Activated CD4-positive, alpha-beta memory T cell treated with anti-CD3 and anti-CD28 coated beads, Interleukin-2, amount 10 ng/mL, durations not matched to agents 7 days and 5 days (primary cell): ENCODE measurements at regions of chr15 and their contacts with region 1.

Region 1: GRCh38 chr15:78540141-78540928 is at the start of gene PSMA4:
- DNase-seq: peak; percentile 94
- H3K4me3 Mint-ChIP-seq: peak within 1 kb of the TSS; percentile 90
- H3K27ac Mint-ChIP-seq: peak within 1 kb of the TSS; percentile 87
- H3K4me1 Mint-ChIP-seq: peaks cover 38% of the 10 kb centered on the region
- H3K27me3 Mint-ChIP-seq: no peaks in the 10 kb centered on the region
- total RNA-seq, gene PSMA4: 226 to 235 TPM

Region 2: DNA sequence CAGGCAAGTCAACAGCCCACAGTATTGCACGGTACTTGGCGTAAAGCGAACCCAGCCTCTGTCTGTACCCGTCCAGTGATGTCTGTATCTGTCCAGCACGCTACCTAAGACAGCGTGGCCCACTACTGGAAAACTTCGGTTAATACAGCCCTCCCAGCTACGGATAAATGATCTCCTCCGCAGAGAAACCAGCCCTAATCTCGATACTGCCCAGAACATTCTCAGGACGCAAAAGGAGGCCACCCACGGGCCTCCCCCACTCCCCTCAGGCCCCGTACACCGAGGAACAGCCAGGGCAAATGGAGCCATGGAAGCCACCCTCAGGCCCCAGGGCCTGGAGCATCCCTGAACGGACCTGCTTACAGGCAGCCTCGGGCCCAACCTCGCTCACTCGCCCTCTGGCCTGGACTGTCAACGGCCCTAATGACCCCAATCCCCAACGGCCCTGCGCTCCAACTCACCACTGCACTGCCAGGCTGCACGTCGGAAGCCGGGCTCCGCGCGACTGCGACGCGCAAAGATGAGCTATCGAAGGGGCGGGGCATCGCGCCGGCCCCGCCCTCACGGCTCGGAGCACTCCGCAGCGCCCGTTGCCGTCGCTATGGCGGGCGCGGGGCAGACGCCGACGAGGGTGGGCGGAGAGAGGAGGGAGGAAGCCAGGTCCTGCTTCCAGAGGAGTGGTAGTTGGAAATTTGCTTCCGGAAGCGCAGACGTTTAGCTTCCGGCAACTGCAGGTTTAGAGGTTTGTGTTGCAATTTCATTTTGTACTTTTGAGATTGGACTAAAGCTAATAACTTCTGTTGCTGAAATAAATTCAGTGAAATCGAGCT is 241.0 kb before region 1 on chr15 and contains the start of gene SKIC8:
- CTCF ChIA-PET with region 1: interaction called, 4 read pairs
- POLR2A ChIA-PET with region 1: interaction called, 15 read pairs
- DNase-seq: peak; percentile 92
- H3K4me3 Mint-ChIP-seq: peak within 1 kb of the TSS; percentile 96
- H3K27ac Mint-ChIP-seq: peak within 1 kb of the TSS; percentile 81
- H3K4me1 Mint-ChIP-seq: peaks cover 37% of the 10 kb centered on the region
- H3K27me3 Mint-ChIP-seq: no peaks in the 10 kb centered on the region
- total RNA-seq, gene SKIC8: 35.4 to 35.7 TPM

Region 3: GRCh38 chr15:78508272-78508671 is 32.1 kb before region 1 on chr15:
- CTCF ChIA-PET with region 1: interaction called, 3 read pairs
- POLR2A ChIA-PET with region 1: interaction called, 16 read pairs
- DNase-seq: no peak
- H3K4me3 Mint-ChIP-seq: peak overlapping the region; percentile 85
- H3K27ac Mint-ChIP-seq: no peak overlapping the region
- H3K4me1 Mint-ChIP-seq: peaks cover 24% of the 10 kb centered on the region
- H3K27me3 Mint-ChIP-seq: peaks cover 19% of the 10 kb centered on the region

Region 4: DNA sequence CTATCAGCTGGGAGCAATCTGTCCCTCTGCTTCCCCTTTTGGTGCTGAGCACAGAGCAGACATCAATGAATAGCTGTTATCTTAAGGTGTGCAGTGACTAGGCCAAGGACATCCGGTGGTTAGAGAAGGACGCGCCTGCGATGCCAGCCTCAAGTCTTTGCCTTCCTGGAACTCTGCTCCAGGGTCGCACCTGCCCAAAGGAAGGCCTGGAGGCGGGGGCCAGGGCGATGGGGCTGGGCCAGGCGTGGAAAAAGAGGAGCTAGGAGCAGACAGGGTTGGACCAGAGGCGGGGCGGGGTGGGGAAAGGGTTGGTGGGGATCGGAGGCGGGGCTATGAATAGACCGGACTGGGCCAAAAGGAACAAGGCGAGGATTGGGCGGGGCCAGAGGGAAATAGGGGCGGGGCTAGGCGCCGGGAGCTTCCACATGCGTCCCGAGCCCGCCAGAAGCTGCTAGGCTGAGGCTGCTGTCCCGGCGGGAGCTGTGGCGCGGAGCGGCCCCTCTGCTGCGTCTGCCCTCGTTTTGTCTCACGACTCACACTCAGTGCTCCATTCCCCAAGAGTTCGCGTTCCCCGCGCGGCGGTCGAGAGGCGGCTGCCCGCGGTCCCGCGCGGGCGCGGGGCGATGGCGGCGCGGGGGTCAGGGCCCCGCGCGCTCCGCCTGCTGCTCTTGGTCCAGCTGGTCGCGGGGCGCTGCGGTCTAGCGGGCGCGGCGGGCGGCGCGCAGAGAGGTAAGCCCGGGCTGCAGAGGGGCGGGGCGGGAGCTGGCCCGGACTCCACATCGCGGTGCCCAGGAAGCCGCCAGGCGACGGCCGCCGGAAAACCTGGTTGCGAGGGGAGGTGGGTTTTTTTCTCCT is 25.0 kb after region 1 on chr15 and contains the start of gene CHRNA5:
- CTCF ChIA-PET with region 1: interaction called, 4 read pairs
- POLR2A ChIA-PET with region 1: interaction called, 47 read pairs
- DNase-seq: peak; percentile 51
- H3K4me3 Mint-ChIP-seq: peak within 1 kb of the TSS; percentile 81
- H3K27ac Mint-ChIP-seq: peak within 1 kb of the TSS; percentile 45
- H3K4me1 Mint-ChIP-seq: peaks cover 27% of the 10 kb centered on the region
- H3K27me3 Mint-ChIP-seq: peaks cover 19% of the 10 kb centered on the region
- total RNA-seq, gene CHRNA5: 2.1 to 3.1 TPM